Dorsolateral prefrontal cortex (tissue), 120 donors: ENCODE measurements at regions of chr13 and their contacts with region 1.

Region 1: DNA sequence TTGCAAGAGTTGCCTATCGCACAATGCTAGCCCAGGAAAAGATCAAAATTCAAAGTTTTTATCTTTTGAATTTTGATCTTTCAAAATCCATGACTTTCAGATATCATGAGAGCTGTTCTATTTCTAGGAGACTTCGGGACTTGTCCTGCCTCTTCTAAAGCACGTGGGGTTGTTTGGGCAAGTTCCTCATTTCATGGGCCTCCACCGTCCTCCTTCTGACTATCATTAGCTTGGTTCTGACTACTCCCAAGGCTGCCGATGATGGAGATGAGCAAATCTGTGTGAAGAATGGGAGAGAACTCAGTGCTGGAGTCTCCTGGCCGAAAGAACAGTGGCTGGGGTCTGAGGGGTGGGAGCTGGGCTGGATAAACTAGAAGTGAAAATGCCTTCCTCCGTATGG is 86.5 kb downstream of the COL4A1 start:
- DNase-seq: no peak
- H3K4me3 ChIP-seq: no peak overlapping the region
- H3K27ac ChIP-seq: peak overlapping the region in 11 of 59 donors; percentile 0 to 87 (median 27)
- H3K27me3 ChIP-seq: no peaks in the 10 kb centered on the region
- CTCF ChIP-seq: no peak

Region 2: DNA sequence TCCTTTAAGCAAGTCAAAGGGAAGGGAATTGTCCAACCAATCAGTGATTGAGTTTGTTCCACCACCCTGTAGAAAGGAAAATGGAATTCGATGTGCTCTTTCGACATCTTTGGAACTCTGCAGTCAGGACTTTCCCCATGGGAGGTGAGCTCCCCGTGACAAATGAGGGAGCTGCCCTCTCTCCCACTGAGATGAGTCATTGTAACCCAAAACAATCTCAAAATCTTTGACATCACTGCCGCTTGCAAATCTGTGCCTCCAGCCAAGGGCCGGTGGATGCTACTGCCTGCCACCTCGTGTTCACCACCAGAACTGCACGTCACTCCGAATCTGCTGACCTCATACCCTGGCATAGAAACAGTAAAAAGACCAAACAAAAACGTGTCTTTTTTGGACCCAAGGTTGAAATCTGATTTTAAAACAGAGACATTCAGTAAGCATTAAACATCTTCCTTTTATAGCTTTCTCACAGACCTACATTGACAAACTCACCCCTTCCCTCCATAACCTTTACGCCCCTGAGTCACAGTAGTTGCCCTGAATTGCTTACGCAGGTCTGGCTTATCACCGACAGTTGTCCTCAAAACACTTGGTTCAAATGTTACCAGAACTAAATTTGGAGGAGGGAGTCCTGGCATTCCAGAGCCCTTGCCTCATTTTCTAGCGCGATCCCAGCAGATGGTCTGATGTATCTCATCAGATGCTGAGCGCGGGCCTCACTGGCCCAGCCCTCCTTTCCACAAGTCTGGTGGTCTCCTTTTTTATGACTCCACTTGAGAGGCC is 191.9 kb after region 1 on chr13:
- intact Hi-C with region 1: loop called (anchors 1 to 5 kb)
- DNase-seq: peak; percentile 46 to 89 (median 84)
- H3K4me3 ChIP-seq: peak overlapping the region in 35 of 59 donors; percentile 2 to 56 (median 23)
- H3K27ac ChIP-seq: peak overlapping the region in 51 of 59 donors; percentile 2 to 84 (median 58)
- H3K27me3 ChIP-seq: no peaks in the 10 kb centered on the region
- CTCF ChIP-seq: peak; percentile 75 to 98 (median 96)

Region 3: GRCh38 chr13:110676595-110677587 is 456.4 kb after region 1 on chr13:
- intact Hi-C with region 1: no loop called
- DNase-seq: no peak
- H3K4me3 ChIP-seq: no peak overlapping the region
- H3K27ac ChIP-seq: peak overlapping the region in 1 of 59 donors; percentile 29
- H3K27me3 ChIP-seq: no peaks in the 10 kb centered on the region
- CTCF ChIP-seq: no peak